K562 (cell line): ENCODE measurements at regions of chr20 and their contacts with region 1.

Region 1: DNA sequence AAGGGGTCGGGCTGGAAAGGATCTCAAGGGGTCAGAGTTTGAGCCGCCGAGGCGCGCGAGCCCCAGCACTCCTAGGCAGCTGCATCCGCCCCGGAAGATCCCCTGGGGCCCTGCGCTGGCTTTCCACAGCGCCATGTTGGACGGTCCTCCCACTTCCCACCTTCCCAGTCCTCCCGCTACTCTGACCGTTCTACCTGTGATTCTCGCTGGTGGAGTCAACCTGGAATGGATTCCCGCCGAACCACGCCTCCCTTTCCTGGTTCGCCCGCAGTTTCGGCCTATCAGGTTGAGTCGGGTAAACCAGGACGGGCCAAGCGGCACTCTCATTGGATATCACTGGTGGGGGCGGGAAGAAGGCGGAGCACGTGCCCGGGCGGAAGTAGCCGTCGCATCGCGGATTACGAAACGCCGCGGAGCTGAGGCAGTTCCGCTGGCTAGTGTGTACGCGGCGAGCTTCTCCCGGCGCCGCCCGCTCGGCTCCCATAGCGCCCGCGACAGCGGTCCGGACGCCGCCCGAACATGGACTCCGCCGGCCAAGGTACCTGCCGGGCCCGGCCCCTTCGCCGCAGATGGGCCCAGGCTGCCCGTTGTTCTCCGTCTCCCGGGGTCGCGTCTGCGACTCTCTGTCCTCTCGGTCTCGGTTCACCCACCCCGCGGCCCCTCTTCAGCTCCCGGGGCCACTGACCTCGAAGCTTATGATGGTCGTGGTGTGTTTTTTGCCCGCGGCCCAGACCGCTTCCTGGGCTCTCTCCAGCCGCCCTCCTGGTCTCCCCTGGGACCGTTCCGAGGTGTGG is at the start of gene TPD52L2:
- DNase-seq: peak; percentile 94 to 99 (median 97)
- ATAC-seq: peak; percentile 91
- H3K4me3 ChIP-seq: peak within 1 kb of the TSS; percentile 95
- H3K27ac ChIP-seq: peak within 1 kb of the TSS; percentile 89
- H3K4me1 ChIP-seq: peaks cover 9 to 63% of the 10 kb centered on the region in 2 experiments; a peak in 4 of 5 replicates
- H3K27me3 ChIP-seq: no peaks in the 10 kb centered on the region
- CTCF ChIP-seq: no peak
- EP300 ChIP-seq: no peak
- POLR2A ChIP-seq: peak; percentile 91
- RAD21 ChIP-seq: no peak
- polyA plus RNA-seq, gene TPD52L2: 1.9 to 9.3 TPM

Region 2: DNA sequence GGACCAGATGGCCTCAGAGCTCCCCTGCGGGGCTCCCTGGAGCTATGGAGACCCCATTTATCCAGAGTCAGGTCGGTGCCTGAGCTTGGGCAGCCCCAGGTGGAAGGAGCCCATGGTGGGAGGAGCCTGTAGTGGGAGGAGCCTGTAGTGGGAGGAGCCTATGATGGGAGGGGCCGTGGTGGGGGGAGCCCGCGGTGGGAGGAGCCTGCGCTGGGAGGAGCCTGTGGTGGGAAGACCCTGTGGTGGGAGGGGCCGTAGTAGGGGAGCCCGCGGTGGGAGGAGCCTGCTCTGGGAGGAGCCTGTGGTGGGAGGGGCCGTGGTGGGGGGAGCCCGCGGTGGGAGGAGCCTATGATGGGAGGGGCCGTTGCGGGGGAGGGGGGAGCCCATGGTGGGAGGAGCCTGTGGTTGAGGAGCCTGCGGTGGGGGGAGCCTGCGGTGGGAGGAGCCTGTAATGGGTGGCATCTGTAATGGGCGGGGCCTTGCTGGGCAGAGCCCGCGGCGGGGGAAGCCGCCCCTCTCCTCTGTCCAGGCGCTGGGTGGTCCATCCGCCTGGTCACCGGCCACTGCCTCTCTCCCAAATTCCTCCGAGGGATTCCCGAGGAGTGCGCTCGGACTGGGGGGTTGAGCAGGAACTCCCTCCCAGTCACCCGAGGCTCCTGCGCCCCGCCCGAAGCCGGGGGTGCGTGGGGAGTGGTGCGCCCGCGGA is 311.7 kb before region 1 on chr20:
- CTCF ChIA-PET with region 1: no interaction called
- POLR2A ChIA-PET with region 1: no interaction called
- in situ Hi-C with region 1: no loop called
- intact Hi-C with region 1: loop called (anchors 10 kb)
- DNase-seq: peak; percentile 91 to 93 (median 92)
- ATAC-seq: peak; percentile 86
- H3K4me3 ChIP-seq: peak overlapping the region; percentile 76
- H3K27ac ChIP-seq: peak overlapping the region; percentile 60
- H3K4me1 ChIP-seq: peaks cover 15 to 69% of the 10 kb centered on the region in 2 experiments
- H3K27me3 ChIP-seq: no peaks in the 10 kb centered on the region; a peak in 1 of 5 replicates
- CTCF ChIP-seq: no peak
- EP300 ChIP-seq: no peak
- POLR2A ChIP-seq: peak; percentile 59; the same call in 1 of the 2 replicates
- RAD21 ChIP-seq: no peak

Region 3: GRCh38 chr20:63627129-63627750 is 237.8 kb before region 1 on chr20:
- CTCF ChIA-PET with region 1: no interaction called
- POLR2A ChIA-PET with region 1: no interaction called
- in situ Hi-C with region 1: no loop called
- intact Hi-C with region 1: no loop called
- DNase-seq: peak; percentile 93 to 97 (median 96)
- ATAC-seq: peak; percentile 76
- H3K4me3 ChIP-seq: peak overlapping the region; percentile 99
- H3K27ac ChIP-seq: peak overlapping the region; percentile 80
- H3K4me1 ChIP-seq: peaks cover 7 to 46% of the 10 kb centered on the region in 2 experiments; a peak in 4 of 5 replicates
- H3K27me3 ChIP-seq: no peaks in the 10 kb centered on the region
- CTCF ChIP-seq: no peak
- EP300 ChIP-seq: no peak
- POLR2A ChIP-seq: peak; percentile 90
- RAD21 ChIP-seq: no peak

Region 4: GRCh38 chr20:63731392-63731791 is 133.7 kb before region 1 on chr20:
- CTCF ChIA-PET with region 1: no interaction called
- POLR2A ChIA-PET with region 1: no interaction called
- in situ Hi-C with region 1: no loop called
- intact Hi-C with region 1: no loop called
- DNase-seq: no peak
- ATAC-seq: no peak
- H3K4me3 ChIP-seq: no peak overlapping the region
- H3K27ac ChIP-seq: no peak overlapping the region
- H3K4me1 ChIP-seq: peaks cover 5 to 39% of the 10 kb centered on the region in 2 experiments; a peak in 4 of 5 replicates
- H3K27me3 ChIP-seq: no peaks in the 10 kb centered on the region
- CTCF ChIP-seq: no peak
- EP300 ChIP-seq: no peak
- POLR2A ChIP-seq: no peak
- RAD21 ChIP-seq: no peak

Region 5: DNA sequence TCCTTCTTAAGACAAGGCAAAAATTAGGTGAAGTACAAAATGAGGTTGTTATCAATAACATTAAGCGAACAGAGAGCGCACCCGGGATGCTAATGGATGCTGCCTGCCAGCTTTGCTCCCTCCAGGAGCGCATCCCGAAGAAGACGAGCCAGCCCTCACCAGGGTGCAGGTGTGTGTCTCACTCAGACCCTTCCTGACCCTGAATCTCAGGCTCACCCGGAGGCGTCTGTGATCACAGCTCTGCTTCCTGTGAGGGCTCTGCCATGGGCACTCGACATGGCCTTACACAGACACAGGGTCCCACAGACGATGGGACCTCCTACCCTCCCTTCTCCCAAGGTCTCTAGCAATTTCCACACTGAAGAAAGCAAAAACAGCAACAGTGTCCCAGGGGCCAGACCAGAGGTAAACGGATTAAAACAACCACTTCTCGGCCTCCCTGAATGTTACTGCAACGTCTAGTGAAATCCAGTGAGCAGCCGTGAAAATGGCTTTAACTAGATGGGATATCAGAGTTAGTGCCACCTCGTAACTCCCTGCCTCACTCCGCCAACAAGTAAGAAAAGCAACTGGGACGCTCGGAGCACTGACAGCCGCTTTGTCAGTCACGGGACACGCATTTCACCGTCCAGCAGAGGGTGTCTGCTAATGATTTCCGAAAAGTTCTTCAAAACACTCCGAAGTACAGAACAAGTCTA is 45.7 kb before region 1 on chr20:
- CTCF ChIA-PET with region 1: interaction called, 3 read pairs
- POLR2A ChIA-PET with region 1: no interaction called
- in situ Hi-C with region 1: no loop called
- intact Hi-C with region 1: loop called (anchors 2 kb)
- DNase-seq: peak; percentile 56 to 78 (median 59)
- ATAC-seq: peak; percentile 88
- H3K4me3 ChIP-seq: peak overlapping the region; percentile 32
- H3K27ac ChIP-seq: peak overlapping the region; percentile 32; the same call in 1 of the 3 replicates
- H3K4me1 ChIP-seq: peaks cover 15 to 32% of the 10 kb centered on the region in 2 experiments
- H3K27me3 ChIP-seq: peaks cover 0 to 7% of the 10 kb centered on the region in 2 experiments; a peak in 2 of 5 replicates
- CTCF ChIP-seq: peak; percentile 65 to 72 (median 68)
- EP300 ChIP-seq: no peak
- POLR2A ChIP-seq: no peak
- RAD21 ChIP-seq: peak; percentile 44 to 58

Region 6: GRCh38 chr20:63854069-63854765 is 10.8 kb before region 1 on chr20:
- CTCF ChIA-PET with region 1: no interaction called
- POLR2A ChIA-PET with region 1: interaction called, 13 read pairs
- in situ Hi-C with region 1: no loop called
- intact Hi-C with region 1: no loop called
- DNase-seq: peak in 1 of 4 experiments; percentile 42
- ATAC-seq: no peak; the same call in 2 of the 3 replicates
- H3K4me3 ChIP-seq: no peak overlapping the region
- H3K27ac ChIP-seq: no peak overlapping the region
- H3K4me1 ChIP-seq: peaks cover 18 to 59% of the 10 kb centered on the region in 2 experiments
- H3K27me3 ChIP-seq: no peaks in the 10 kb centered on the region
- CTCF ChIP-seq: no peak
- EP300 ChIP-seq: no peak
- POLR2A ChIP-seq: no peak
- RAD21 ChIP-seq: no peak

Region 7: DNA sequence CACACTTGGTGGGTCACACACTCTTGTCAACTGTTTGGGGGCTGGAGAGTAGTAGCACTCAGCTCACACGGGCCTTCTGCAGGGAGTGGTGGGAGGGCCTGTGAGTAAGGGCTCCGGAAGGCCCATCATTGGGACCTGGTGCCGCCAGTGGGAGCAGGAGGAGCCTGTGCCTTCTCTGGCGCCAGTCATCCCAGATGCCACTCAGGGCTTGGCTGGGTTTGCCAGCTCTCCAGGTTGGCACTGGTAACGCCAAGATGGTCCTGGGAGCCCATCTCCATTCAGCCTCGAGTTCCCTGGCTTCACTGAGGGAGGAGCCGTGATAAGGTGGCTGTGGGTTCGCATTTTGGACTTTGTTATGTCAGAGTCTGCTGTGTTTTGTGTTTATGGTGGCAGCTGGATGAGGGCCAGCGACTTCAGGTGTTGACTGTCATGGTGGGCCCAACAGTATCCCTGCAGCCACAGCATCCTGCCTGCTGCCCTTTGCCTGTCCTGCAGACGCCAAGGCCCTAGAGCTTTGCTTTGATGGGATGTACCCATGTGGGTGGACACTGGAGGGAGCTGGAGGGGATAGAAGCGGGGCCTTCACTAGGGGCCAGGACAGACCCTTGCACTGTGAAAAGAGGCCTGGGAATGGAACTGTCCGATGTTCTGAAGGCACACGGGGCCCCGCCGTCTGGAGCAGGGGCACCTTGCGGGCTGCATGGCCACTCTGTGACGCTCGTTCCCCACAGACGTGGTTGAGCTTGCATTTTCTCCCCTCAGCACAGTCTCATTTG is 16.6 kb after region 1 on chr20:
- CTCF ChIA-PET with region 1: interaction called, 3 read pairs
- POLR2A ChIA-PET with region 1: interaction called, 39 read pairs
- in situ Hi-C with region 1: no loop called
- intact Hi-C with region 1: no loop called
- DNase-seq: no peak
- ATAC-seq: no peak; the same call in 2 of the 3 replicates
- H3K4me3 ChIP-seq: no peak overlapping the region
- H3K27ac ChIP-seq: no peak overlapping the region
- H3K4me1 ChIP-seq: peaks cover 0 to 16% of the 10 kb centered on the region in 2 experiments; a peak in 1 of 5 replicates
- H3K27me3 ChIP-seq: no peaks in the 10 kb centered on the region
- CTCF ChIP-seq: no peak
- EP300 ChIP-seq: no peak
- POLR2A ChIP-seq: no peak
- RAD21 ChIP-seq: no peak